Activated B cell treated with CpG ODN at 0.5 μM for 24 hours (primary cell): ENCODE measurements at regions of chr6 and their contacts with region 1.

Region 1: GRCh38 chr6:142946181-142946923 is 1.4 kb upstream of the HIVEP2 start:
- DNase-seq: peak; percentile 75
- ATAC-seq: peak; percentile 38
- H3K4me3 Mint-ChIP-seq: peak overlapping the region; percentile 93
- H3K27ac Mint-ChIP-seq: peak overlapping the region; percentile 96
- H3K4me1 Mint-ChIP-seq: peaks cover 41% of the 10 kb centered on the region
- H3K27me3 Mint-ChIP-seq: no peaks in the 10 kb centered on the region
- CTCF ChIP-seq: no peak

Region 2: GRCh38 chr6:142746524-142746923 is 199.8 kb before region 1 on chr6:
- CTCF ChIA-PET with region 1: no interaction called
- POLR2A ChIA-PET with region 1: interaction called, 3 read pairs
- intact Hi-C with region 1: loop called (anchors 1 kb)
- DNase-seq: no peak
- ATAC-seq: peak; percentile 58
- H3K4me3 Mint-ChIP-seq: no peak overlapping the region
- H3K27ac Mint-ChIP-seq: no peak overlapping the region
- H3K4me1 Mint-ChIP-seq: peaks cover 11% of the 10 kb centered on the region
- H3K27me3 Mint-ChIP-seq: peaks cover 3% of the 10 kb centered on the region
- CTCF ChIP-seq: no peak

Region 3: GRCh38 chr6:142857233-142857761 is 89.1 kb before region 1 on chr6:
- CTCF ChIA-PET with region 1: no interaction called
- POLR2A ChIA-PET with region 1: interaction called, 8 read pairs
- intact Hi-C with region 1: loop called (anchors 1 kb)
- DNase-seq: no peak
- ATAC-seq: peak; percentile 26
- H3K4me3 Mint-ChIP-seq: peak overlapping the region; percentile 73
- H3K27ac Mint-ChIP-seq: peak overlapping the region; percentile 95
- H3K4me1 Mint-ChIP-seq: peaks cover 90% of the 10 kb centered on the region
- H3K27me3 Mint-ChIP-seq: no peaks in the 10 kb centered on the region
- CTCF ChIP-seq: no peak

Region 4: GRCh38 chr6:142935553-142936517 is 10.5 kb before region 1 on chr6:
- CTCF ChIA-PET with region 1: interaction called, 7 read pairs
- POLR2A ChIA-PET with region 1: interaction called, 8 read pairs
- intact Hi-C with region 1: loop called (anchors 1 kb)
- DNase-seq: peak; percentile 35
- ATAC-seq: peak; percentile 88
- H3K4me3 Mint-ChIP-seq: peak overlapping the region; percentile 83
- H3K27ac Mint-ChIP-seq: peak overlapping the region; percentile 90
- H3K4me1 Mint-ChIP-seq: peaks cover 72% of the 10 kb centered on the region
- H3K27me3 Mint-ChIP-seq: no peaks in the 10 kb centered on the region
- CTCF ChIP-seq: no peak

Region 5: DNA sequence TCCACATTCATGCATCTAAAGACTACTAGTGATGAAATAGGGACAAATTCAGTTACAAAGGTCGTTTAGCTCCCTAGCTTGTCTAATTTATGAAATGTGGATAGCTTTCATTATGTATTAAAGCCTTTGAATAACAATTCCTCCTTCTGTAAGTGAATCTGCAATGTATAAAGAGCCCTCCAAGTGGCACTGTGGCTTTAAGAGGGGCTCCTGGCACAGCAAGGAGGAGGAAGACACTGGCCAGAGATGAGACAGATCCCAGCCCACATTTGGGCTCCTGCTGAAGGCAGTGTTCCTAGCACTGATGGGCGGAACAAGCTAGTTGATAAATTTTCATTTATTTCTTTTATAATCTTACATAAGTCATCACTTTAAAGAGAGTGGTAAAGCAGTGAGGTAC is 582.7 kb after region 1 on chr6:
- CTCF ChIA-PET with region 1: no interaction called
- POLR2A ChIA-PET with region 1: interaction called, 10 read pairs
- intact Hi-C with region 1: no loop called
- DNase-seq: no peak
- ATAC-seq: no peak
- H3K4me3 Mint-ChIP-seq: no peak overlapping the region
- H3K27ac Mint-ChIP-seq: no peak overlapping the region
- H3K4me1 Mint-ChIP-seq: peaks cover 10% of the 10 kb centered on the region
- H3K27me3 Mint-ChIP-seq: no peaks in the 10 kb centered on the region
- CTCF ChIP-seq: no peak

Region 6: GRCh38 chr6:144149891-144150709 is 1203.7 kb after region 1 on chr6 and contains the start of gene STX11:
- CTCF ChIA-PET with region 1: no interaction called
- POLR2A ChIA-PET with region 1: no interaction called
- intact Hi-C with region 1: loop called (anchors 5 kb)
- DNase-seq: peak; percentile 84
- ATAC-seq: peak; percentile 72
- H3K4me3 Mint-ChIP-seq: peak within 1 kb of the TSS; percentile 92
- H3K27ac Mint-ChIP-seq: peak within 1 kb of the TSS; percentile 96
- H3K4me1 Mint-ChIP-seq: peaks cover 46% of the 10 kb centered on the region
- H3K27me3 Mint-ChIP-seq: no peaks in the 10 kb centered on the region
- CTCF ChIP-seq: no peak
- total RNA-seq, gene STX11: 23.3 and 26.4 TPM in 2 replicates